ENCODE measurements at regions of chr9 and their contacts with region 1.

Region 1: GRCh38 chr9:36995927-36996705 is 38.0 kb downstream of the PAX5 start:
- DNase-seq: peak; percentile 86
- ATAC-seq: peak; percentile 34
- H3K4me3 ChIP-seq: peak overlapping the region in 4 of 5 experiments; percentile 16 to 58 (median 33)
- H3K4me3 Mint-ChIP-seq: peak overlapping the region; percentile 74
- H3K27ac ChIP-seq: peak overlapping the region; percentile 97 to 98
- H3K27ac Mint-ChIP-seq: peak overlapping the region; percentile 96
- H3K4me1 ChIP-seq: peaks cover 96 to 99% of the 10 kb centered on the region in 2 donors
- H3K4me1 Mint-ChIP-seq: peaks cover 94% of the 10 kb centered on the region
- H3K27me3 ChIP-seq: no peaks in the 10 kb centered on the region
- H3K27me3 Mint-ChIP-seq: no peaks in the 10 kb centered on the region
- CTCF ChIP-seq: peak; percentile 76

Region 2: DNA sequence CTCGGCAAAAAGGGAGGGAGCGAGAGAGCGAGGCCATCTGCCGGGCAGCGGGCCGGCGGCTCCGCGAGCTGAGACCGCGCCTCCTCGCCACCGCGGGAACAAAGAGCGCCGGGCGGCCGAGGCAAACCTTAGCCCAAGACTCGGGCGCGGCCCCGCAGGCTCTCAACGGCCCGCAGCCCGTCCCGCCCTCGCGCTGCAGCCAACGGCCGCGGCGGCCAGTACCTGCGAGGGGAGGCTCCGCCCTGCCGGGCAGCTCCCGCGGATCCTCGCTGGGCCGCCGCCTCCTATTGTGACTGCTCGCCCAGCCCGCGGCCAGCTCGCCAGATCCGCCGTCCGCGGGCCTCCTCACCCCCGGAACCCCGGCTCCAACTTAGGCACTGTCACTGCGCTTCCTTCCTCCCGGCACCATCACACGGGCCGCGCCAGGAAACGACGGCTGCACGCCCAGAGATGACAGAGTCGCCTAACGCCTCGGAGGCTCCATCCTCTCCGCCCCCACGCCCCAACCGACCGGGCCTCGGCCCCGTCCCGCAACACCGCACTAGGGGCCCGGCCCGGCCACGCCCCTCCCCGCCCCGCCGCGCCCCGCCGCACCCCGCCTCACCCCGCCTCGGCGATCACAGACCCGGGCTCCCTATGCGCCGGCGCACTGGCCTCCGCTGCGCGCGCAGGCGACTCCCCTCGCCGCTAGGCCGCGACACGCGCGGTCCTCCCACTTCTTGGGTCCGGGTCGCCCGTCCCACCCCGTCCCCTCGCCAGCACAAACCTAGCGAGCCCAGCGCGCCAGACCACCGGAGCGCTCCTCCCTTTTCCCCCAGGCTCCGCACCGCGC is 595.6 kb before region 1 on chr9:
- CTCF ChIA-PET with region 1: no interaction called
- POLR2A ChIA-PET with region 1: no interaction called
- intact Hi-C with region 1: loop called (anchors 10 kb)
- DNase-seq: peak; percentile 97
- ATAC-seq: peak; percentile 79
- H3K4me3 ChIP-seq: peak overlapping the region; percentile 72 to 90 (median 81)
- H3K4me3 Mint-ChIP-seq: peak overlapping the region; percentile 88
- H3K27ac ChIP-seq: peak overlapping the region; percentile 94 to 98
- H3K27ac Mint-ChIP-seq: peak overlapping the region; percentile 93
- H3K4me1 ChIP-seq: peaks cover 18 to 21% of the 10 kb centered on the region in 2 donors
- H3K4me1 Mint-ChIP-seq: peaks cover 34% of the 10 kb centered on the region
- H3K27me3 ChIP-seq: no peaks in the 10 kb centered on the region
- H3K27me3 Mint-ChIP-seq: no peaks in the 10 kb centered on the region
- CTCF ChIP-seq: no peak

Region 3: DNA sequence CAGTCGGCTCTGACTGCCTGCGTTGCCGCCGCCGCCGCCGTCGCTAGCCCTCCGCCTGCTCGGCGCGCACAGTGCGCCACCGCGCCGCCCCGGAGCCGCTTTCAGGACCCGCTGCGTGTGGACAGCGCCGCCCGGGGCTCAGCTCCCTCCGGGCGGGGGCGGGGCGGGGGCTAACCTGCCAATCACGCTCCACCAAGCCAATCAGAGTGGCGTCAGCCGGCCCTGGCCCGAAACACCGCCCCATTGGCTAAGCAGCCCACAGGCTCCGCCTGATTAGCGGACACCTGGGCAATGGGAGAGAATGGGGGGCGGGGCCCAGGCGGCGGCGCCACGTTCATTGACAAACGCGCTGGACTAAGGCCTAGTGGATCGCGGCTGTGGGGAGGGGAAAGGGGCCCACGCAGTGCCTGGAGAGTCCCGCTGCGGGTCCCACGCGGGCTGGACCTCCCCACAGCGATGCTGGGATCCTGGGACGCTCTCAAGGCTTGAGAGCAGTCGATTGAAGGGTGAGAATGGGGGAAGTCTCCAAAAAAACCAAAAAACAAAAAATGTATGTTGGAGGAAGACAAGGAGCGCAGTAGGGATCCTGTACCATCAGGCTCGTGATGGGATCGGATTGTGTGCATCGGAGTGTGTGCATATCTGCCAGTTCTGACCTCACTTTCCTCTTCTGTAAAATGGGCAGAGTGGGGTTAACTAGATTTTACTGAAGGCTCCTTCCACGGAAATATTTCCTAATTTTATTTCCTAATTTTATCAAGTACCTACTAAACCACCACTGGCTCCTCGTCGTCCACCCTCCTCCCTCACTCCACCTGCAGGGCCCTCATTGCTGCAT is 31.7 kb after region 1 on chr9:
- CTCF ChIA-PET with region 1: interaction called, 162 read pairs
- POLR2A ChIA-PET with region 1: interaction called, 57 read pairs
- intact Hi-C with region 1: loop called (anchors 1 kb)
- DNase-seq: peak; percentile 99
- ATAC-seq: peak; percentile 84
- H3K4me3 ChIP-seq: peak overlapping the region; percentile 5 to 95 (median 86)
- H3K4me3 Mint-ChIP-seq: peak overlapping the region; percentile 89
- H3K27ac ChIP-seq: peak overlapping the region; percentile 98 to 100
- H3K27ac Mint-ChIP-seq: peak overlapping the region; percentile 96
- H3K4me1 ChIP-seq: peaks cover 62 to 81% of the 10 kb centered on the region in 2 donors
- H3K4me1 Mint-ChIP-seq: peaks cover 78% of the 10 kb centered on the region
- H3K27me3 ChIP-seq: no peaks in the 10 kb centered on the region
- H3K27me3 Mint-ChIP-seq: no peaks in the 10 kb centered on the region
- CTCF ChIP-seq: no peak

Region 4: DNA sequence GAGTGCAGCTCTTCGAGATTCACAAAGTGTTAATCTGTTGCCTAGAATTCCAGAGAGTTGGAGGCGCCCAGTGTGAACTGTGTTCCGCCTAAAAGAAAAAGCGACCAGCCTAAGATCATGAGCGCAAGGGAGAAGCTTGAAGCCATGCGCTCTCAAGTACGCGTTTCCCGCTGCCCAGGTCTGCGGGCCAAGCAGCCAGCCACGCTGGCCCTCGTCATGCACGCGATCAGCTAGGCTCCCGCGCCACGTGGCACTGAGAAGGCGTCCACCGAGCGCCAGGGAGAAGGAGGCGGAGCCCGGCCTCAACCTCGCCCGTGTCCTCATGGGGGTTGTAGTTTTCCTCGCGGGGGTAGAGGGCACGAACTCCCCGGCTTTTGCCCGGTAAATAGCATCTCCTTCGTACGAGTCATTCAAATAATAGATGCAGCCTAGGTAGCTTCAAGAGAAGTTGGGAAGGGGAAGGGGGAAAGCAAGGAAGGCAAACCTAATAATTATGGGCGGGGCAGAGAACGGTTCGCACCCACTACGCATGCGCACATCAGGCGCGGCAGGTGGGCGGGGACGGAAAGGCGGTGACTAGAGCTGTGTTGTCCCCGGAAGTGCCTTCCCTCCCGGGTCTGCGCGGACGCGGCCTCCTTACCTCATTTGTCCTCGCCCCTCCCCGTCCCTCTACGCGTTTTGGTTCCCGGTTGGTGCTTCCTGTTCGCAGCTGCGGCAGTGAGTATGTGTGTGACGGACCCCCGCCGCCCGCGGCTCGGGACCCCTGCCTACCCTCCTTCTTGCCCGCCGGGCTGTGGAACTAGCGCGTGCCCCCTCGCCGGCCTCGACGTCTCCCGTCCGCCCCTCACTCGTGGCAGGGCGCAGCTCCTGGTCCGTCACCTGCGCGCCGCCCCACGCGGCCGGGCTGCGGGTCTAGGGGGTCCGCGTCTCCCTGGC is 124.1 kb after region 1 on chr9 and contains the start of gene ZCCHC7:
- CTCF ChIA-PET with region 1: interaction called, 6 read pairs
- POLR2A ChIA-PET with region 1: interaction called, 7 read pairs
- intact Hi-C with region 1: loop called (anchors 1 kb)
- DNase-seq: peak; percentile 98
- ATAC-seq: peak; percentile 92
- H3K4me3 ChIP-seq: peak within 1 kb of the TSS; percentile 80 to 97 (median 94)
- H3K4me3 Mint-ChIP-seq: peak within 1 kb of the TSS; percentile 100
- H3K27ac ChIP-seq: peak within 1 kb of the TSS; percentile 93 to 98
- H3K27ac Mint-ChIP-seq: peak within 1 kb of the TSS; percentile 100
- H3K4me1 ChIP-seq: peaks cover 36 to 44% of the 10 kb centered on the region in 2 donors
- H3K4me1 Mint-ChIP-seq: peaks cover 44% of the 10 kb centered on the region
- H3K27me3 ChIP-seq: no peaks in the 10 kb centered on the region
- H3K27me3 Mint-ChIP-seq: no peaks in the 10 kb centered on the region
- CTCF ChIP-seq: no peak
- total RNA-seq, gene ZCCHC7: 81.9 and 83.5 TPM in 2 replicates

Region 5: DNA sequence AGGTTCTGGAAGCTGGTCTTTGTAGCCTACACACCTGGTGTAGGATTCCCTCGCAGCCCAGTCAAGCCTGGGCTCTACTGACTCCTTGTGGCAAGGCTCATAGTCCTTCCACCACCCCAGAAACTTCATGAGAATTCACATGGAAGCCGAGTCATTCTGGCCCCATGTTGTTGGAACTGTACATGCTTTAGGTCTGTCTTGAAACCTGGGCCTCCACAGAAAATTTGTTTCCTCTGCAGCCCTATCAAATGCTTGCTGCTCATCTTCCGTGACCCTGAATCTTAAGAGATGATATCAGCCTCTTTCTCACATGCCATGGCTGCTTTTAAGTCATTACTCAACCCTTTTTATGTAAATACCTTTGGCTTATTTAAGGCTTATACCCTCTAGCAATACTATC is 313.0 kb after region 1 on chr9:
- CTCF ChIA-PET with region 1: interaction called, 14 read pairs
- POLR2A ChIA-PET with region 1: interaction called, 7 read pairs
- intact Hi-C with region 1: loop called (anchors 2 kb)
- DNase-seq: peak; percentile 77
- ATAC-seq: peak; percentile 82
- H3K4me3 ChIP-seq: no peak overlapping the region
- H3K4me3 Mint-ChIP-seq: peak overlapping the region; percentile 16
- H3K27ac ChIP-seq: peak overlapping the region; percentile 5 to 64
- H3K27ac Mint-ChIP-seq: peak overlapping the region; percentile 84
- H3K4me1 ChIP-seq: peaks cover 27 to 42% of the 10 kb centered on the region in 2 donors
- H3K4me1 Mint-ChIP-seq: peaks cover 35% of the 10 kb centered on the region
- H3K27me3 ChIP-seq: no peaks in the 10 kb centered on the region
- H3K27me3 Mint-ChIP-seq: no peaks in the 10 kb centered on the region
- CTCF ChIP-seq: peak; percentile 76

Region 6: GRCh38 chr9:37592108-37592951 is 596.2 kb after region 1 on chr9 and contains the start of gene TOMM5:
- CTCF ChIA-PET with region 1: no interaction called
- POLR2A ChIA-PET with region 1: no interaction called
- intact Hi-C with region 1: loop called (anchors 10 kb)
- DNase-seq: peak; percentile 93
- ATAC-seq: peak; percentile 96
- H3K4me3 ChIP-seq: peak within 1 kb of the TSS; percentile 87 to 100 (median 97)
- H3K4me3 Mint-ChIP-seq: peak within 1 kb of the TSS; percentile 99
- H3K27ac ChIP-seq: peak within 1 kb of the TSS; percentile 71 to 83
- H3K27ac Mint-ChIP-seq: peak within 1 kb of the TSS; percentile 96
- H3K4me1 ChIP-seq: peaks cover 23 to 36% of the 10 kb centered on the region in 2 donors
- H3K4me1 Mint-ChIP-seq: peaks cover 46% of the 10 kb centered on the region
- H3K27me3 ChIP-seq: peaks cover 0 to 5% (median 0%) of the 10 kb centered on the region in 4 experiments
- H3K27me3 Mint-ChIP-seq: peaks cover 4% of the 10 kb centered on the region
- CTCF ChIP-seq: no peak
- total RNA-seq, gene TOMM5: 39.7 and 44.4 TPM in 2 replicates

Measured in B cell (primary cell).